SK-N-SH (cell line): ENCODE measurements at regions of chr7 and their contacts with region 1.

Region 1: GRCh38 chr7:44112231-44113000 is 8.3 kb downstream of the AEBP1 start:
- DNase-seq: peak; percentile 50
- H3K4me3 ChIP-seq: no peak overlapping the region
- H3K27ac ChIP-seq: no peak overlapping the region
- H3K4me1 ChIP-seq: peaks cover 0 to 13% of the 10 kb centered on the region in 2 experiments; a peak in 1 of 4 replicates
- H3K27me3 ChIP-seq: no peaks in the 10 kb centered on the region
- CTCF ChIP-seq: no peak
- EP300 ChIP-seq: no peak
- RAD21 ChIP-seq: no peak

Region 2: DNA sequence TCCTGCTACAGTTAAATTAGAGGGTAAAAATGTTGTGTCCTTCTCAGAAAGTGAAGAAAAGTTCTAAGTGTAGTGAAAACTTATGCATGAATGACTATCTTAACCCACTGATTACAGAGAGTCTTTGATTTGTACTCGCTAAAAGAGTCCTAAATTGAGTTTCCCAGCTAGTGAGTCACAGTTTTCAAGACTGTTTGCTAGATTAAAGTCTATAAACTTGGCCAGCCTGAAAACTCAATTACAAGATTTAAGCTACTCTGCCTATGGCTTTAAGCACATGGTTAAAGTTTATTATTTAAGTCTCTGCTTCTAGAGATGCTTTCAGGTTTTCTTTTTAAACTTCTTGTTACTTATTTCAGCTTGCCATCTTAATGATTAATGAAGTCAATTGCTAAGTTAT is 287.5 kb before region 1 on chr7:
- CTCF ChIA-PET with region 1: no interaction called
- POLR2A ChIA-PET with region 1: no interaction called
- DNase-seq: no peak
- H3K4me3 ChIP-seq: no peak overlapping the region
- H3K27ac ChIP-seq: no peak overlapping the region
- H3K4me1 ChIP-seq: no peaks in the 10 kb centered on the region; a peak in 1 of 4 replicates
- H3K27me3 ChIP-seq: peaks cover 21% of the 10 kb centered on the region; the same call in 1 of the 2 replicates
- CTCF ChIP-seq: no peak
- EP300 ChIP-seq: no peak
- RAD21 ChIP-seq: no peak

Region 3: GRCh38 chr7:44123190-44124003 is 11.0 kb after region 1 on chr7 and contains the start of gene POLD2:
- CTCF ChIA-PET with region 1: interaction called, 6 read pairs
- POLR2A ChIA-PET with region 1: interaction called, 18 read pairs
- DNase-seq: peak; percentile 100
- H3K4me3 ChIP-seq: peak within 1 kb of the TSS; percentile 71 to 92
- H3K27ac ChIP-seq: peak within 1 kb of the TSS; percentile 66 to 73
- H3K4me1 ChIP-seq: peaks cover 7 to 20% of the 10 kb centered on the region in 2 experiments; a peak in 3 of 4 replicates
- H3K27me3 ChIP-seq: no peaks in the 10 kb centered on the region
- CTCF ChIP-seq: no peak
- EP300 ChIP-seq: no peak
- RAD21 ChIP-seq: peak; percentile 10; the same call in 1 of the 2 replicates
- polyA plus RNA-seq, gene POLD2: 163 and 194 TPM in 2 replicates

Region 4: DNA sequence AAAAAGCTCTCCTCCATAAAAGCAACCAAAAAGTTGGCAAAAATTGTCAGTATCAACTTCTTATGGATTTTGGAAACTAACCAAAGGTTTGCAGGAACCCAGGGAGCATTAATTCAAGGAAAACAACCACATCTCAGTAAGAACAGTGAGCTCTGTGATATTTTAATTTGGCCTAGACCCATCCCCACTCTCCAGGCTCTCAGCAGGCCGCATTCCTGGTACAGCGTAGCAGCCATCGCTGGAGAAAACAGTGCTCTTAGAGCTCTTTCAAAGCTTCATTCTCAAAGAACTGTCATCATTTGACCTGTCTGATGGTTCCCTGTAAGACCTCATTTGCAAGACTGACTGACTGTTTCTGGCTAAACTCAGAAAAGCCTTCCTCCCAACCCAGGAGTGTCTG is 296.2 kb after region 1 on chr7:
- CTCF ChIA-PET with region 1: no interaction called
- POLR2A ChIA-PET with region 1: no interaction called
- DNase-seq: no peak
- H3K4me3 ChIP-seq: no peak overlapping the region
- H3K27ac ChIP-seq: peak overlapping the region in 1 of 2 experiments; percentile 10; a peak in 1 of 4 replicates
- H3K4me1 ChIP-seq: peaks cover 0 to 9% of the 10 kb centered on the region in 2 experiments; a peak in 2 of 4 replicates
- H3K27me3 ChIP-seq: no peaks in the 10 kb centered on the region
- CTCF ChIP-seq: no peak
- EP300 ChIP-seq: no peak
- RAD21 ChIP-seq: no peak